ENCODE measurements at regions of chr2 and their contacts with region 1.

Region 1: DNA sequence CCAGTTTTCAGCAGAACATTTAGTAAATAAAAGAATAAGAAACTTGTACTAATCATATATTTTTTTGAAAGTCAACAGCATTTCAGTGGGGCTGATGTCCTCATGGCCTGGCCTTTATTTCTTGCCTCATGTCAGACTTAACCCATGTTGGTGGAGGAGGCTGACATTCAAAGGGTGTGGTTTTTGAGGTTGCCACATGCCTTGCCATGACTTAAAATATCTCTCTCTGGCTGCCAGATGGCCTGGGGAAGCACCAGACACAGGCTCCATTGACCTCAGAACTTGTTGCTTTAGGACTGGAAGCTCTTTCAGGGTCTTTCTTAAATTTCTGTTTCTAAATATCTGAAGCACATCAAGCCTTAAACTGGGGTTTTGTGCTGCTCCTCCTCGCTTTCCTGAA is 32.5 kb upstream of the CD28 start:
- DNase-seq: peak; percentile 49
- H3K4me3 Mint-ChIP-seq: peak overlapping the region; percentile 61
- H3K27ac Mint-ChIP-seq: peak overlapping the region; percentile 90
- H3K4me1 Mint-ChIP-seq: peaks cover 33% of the 10 kb centered on the region
- H3K27me3 Mint-ChIP-seq: no peaks in the 10 kb centered on the region

Region 2: DNA sequence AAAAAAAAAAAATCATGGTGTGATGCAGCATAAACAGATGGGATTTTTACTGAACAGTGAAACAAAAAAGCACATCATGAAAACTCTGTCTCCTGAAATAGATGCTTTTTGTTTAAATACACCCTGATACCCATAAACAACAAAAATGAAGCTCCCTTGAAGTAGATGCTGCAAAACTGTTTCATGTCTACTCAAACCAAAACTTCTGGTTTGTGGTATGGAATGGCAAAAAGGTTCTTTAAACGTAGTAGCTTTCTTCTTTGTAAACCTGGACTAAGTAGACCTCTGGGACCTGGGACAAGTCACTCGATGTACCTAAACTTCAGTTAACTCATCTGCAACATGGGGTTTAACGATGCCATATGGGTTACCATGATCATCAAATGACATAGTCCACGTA is 74.4 kb before region 1 on chr2:
- intact Hi-C with region 1: loop called (anchors 5 kb)
- DNase-seq: no peak
- H3K4me3 Mint-ChIP-seq: peak overlapping the region; percentile 37
- H3K27ac Mint-ChIP-seq: no peak overlapping the region
- H3K4me1 Mint-ChIP-seq: peaks cover 39% of the 10 kb centered on the region
- H3K27me3 Mint-ChIP-seq: peaks cover 59% of the 10 kb centered on the region

Region 3: GRCh38 chr2:203683932-203684556 is 10.1 kb after region 1 on chr2:
- intact Hi-C with region 1: loop called (anchors 1 kb)
- DNase-seq: peak; percentile 19
- H3K4me3 Mint-ChIP-seq: no peak overlapping the region
- H3K27ac Mint-ChIP-seq: no peak overlapping the region
- H3K4me1 Mint-ChIP-seq: peaks cover 49% of the 10 kb centered on the region
- H3K27me3 Mint-ChIP-seq: no peaks in the 10 kb centered on the region

Region 4: DNA sequence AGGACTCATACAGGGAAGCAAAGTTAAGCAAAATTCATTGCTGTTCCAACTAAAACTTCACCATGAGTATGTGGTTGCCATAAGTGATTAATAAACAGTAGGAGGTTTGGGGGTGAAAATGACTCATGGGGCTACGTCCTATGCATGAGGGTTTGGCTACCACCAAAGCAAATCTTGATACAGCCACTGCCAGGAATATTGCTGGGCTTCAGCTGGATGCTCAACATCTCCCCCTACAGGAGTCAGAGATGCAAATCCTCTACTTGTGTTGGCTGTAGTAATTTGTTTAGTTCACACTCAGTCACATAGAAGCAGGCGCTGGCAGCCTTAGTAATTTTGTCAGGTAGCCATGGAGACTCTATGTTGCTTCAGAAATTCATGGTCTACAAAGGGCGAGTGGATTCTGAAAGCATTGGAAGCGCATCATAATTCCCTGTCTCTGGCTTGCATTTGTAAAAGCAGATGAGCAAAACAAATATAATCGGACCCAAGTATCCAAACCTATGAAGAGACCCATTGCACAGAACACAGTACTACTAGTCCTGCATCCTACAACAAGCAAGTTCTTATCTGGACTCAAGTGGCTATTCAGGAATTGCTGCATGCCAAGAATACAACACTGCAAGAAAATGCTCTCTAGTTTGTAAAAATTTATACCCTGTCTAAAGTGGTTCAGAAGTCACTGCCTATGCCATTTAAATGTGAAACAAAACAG is 108.5 kb after region 1 on chr2:
- intact Hi-C with region 1: loop called (anchors 2 kb)
- DNase-seq: peak; percentile 50
- H3K4me3 Mint-ChIP-seq: no peak overlapping the region
- H3K27ac Mint-ChIP-seq: peak overlapping the region; percentile 92
- H3K4me1 Mint-ChIP-seq: peaks cover 63% of the 10 kb centered on the region
- H3K27me3 Mint-ChIP-seq: no peaks in the 10 kb centered on the region

Region 5: DNA sequence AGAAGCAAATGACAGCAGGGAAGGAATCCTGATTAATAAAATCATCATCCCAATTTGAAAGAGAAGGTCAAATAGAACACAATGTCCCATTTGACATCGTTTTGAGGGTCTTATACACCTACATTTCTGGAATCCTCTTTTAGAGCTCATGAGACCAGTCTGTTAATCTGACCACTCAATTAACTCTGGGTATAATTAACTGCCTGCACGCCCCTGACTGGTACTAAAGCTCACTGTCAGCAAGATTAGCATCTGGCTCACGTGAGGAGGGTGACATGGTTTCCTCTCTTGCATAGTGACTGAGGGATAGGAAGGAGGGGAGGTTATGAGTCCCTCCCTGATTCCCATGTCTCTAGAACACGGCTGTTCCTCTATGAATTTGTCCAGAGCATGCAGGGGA is 386.9 kb after region 1 on chr2:
- intact Hi-C with region 1: no loop called
- DNase-seq: no peak
- H3K4me3 Mint-ChIP-seq: no peak overlapping the region
- H3K27ac Mint-ChIP-seq: no peak overlapping the region
- H3K4me1 Mint-ChIP-seq: no peaks in the 10 kb centered on the region
- H3K27me3 Mint-ChIP-seq: peaks cover 2% of the 10 kb centered on the region

Measured in activated T-helper 1 cell treated with anti-CD3 and anti-CD28 coated beads, Interleukin-12 subunit alpha, Interleukin-12 subunit beta, Interleukin-2, Interleukin-4 antibody, amounts not matched to agents 30 ng/mL and 10 ng/mL and 1 ng/mL, durations not matched to agents 14 hours and 24 hours and 36 hours (primary cell).